Heart right ventricle (tissue), 16 donors: ENCODE measurements at regions of chr12 and their contacts with region 1.

Region 1: DNA sequence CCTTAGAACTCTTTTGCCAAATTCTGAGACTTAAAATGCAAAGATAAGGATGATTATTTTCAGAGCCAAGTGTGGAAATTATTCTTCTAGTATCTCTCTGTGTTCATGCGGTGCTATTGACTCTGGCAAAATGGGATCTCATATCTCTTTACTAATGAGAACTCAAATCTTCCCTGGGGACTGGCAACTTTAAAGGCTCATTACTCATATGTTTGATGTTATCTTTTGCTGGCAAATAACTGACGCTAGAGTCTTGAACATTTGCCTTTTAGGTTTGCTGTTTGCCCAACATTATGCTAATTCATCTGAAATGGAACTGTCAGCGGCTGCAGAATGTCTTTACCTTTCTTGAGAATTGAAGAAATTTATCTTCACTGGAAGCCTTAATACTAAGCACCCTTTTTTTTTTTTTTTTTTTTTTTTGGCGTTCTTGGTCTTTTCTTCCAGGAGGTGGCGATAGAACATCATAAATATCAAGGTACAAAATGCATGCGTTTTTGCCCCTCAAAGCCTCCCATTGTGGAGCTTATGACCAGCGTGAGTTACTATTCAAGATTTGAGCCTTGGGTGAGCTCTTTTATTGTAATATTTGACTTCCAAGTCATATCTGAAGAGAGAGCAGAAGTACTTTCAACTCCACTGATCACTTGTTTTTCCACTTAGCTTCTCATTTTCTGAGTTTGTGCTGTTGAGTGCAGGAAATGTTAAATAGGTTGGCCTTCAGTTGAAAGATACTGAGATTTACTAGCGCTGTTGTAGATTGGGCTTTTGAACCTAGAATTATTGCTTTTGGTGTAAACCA is 86.6 kb downstream of the CAND1 start:
- DNase-seq: no peak
- ATAC-seq: peak; percentile 54 to 72 (median 66)
- H3K4me3 ChIP-seq: no peak overlapping the region
- H3K27ac ChIP-seq: peak overlapping the region in 5 of 10 donors; percentile 8 to 57 (median 31)
- H3K4me1 ChIP-seq: peaks cover 4 to 52% (median 37%) of the 10 kb centered on the region in 9 donors
- H3K27me3 ChIP-seq: no peaks in the 10 kb centered on the region
- CTCF ChIP-seq: peak; percentile 26 to 74 (median 65)

Region 2: GRCh38 chr12:67068761-67069450 is 286.9 kb before region 1 on chr12:
- intact Hi-C with region 1: no loop called
- DNase-seq: peak in 1 of 2 donors; percentile 19
- ATAC-seq: peak in 3 of 8 donors; percentile 37 to 63 (median 58)
- H3K4me3 ChIP-seq: peak overlapping the region; percentile 14 to 61 (median 52)
- H3K27ac ChIP-seq: no peak overlapping the region
- H3K4me1 ChIP-seq: peaks cover 0 to 14% (median 5%) of the 10 kb centered on the region in 9 donors
- H3K27me3 ChIP-seq: peaks cover 0 to 56% (median 50%) of the 10 kb centered on the region in 7 donors
- CTCF ChIP-seq: no peak

Region 3: DNA sequence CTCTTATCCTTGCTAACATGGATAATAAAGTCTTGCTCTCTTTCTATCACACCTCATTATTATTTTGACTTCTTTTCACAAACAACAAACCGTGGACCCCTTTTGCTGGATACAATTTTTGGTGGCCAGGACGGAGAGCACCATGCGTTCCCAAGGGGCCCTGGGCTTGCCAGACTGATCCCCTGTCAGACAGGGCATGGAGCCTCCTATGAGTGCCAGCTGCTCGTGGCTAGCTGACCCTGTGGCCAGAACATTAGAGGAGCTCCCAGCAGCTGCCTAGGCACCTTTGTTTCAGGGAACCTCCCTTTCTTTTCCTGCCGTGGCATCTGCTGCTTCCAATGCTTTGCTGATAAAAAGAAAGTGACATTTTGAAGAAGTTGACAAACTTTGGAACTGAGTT is 99.1 kb before region 1 on chr12:
- intact Hi-C with region 1: no loop called
- DNase-seq: no peak
- ATAC-seq: no peak
- H3K4me3 ChIP-seq: no peak overlapping the region
- H3K27ac ChIP-seq: no peak overlapping the region
- H3K4me1 ChIP-seq: no peaks in the 10 kb centered on the region
- H3K27me3 ChIP-seq: peaks cover 0 to 6% (median 0%) of the 10 kb centered on the region in 7 donors
- CTCF ChIP-seq: no peak

Region 4: DNA sequence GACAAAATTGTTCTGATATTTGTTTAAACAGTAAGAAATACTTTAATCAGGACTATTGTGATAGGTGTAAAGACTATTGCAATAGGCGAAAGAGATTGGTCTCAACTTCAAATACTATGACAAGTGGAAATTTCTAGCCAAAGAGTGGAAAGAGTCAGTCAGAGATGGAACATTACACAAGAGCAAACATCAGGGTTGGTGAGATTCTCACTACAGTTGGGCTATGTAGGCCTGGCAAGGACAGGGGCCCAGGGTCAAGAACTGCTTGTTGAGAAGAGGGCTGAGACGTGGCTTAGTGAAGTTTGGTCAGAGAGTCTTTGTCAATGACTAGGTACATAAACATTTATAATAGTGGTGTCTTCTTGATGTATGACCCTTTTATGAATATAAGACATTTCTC is 67.2 kb before region 1 on chr12:
- intact Hi-C with region 1: no loop called
- DNase-seq: no peak
- ATAC-seq: peak in 1 of 8 donors; percentile 15
- H3K4me3 ChIP-seq: no peak overlapping the region
- H3K27ac ChIP-seq: no peak overlapping the region
- H3K4me1 ChIP-seq: peaks cover 0 to 14% (median 0%) of the 10 kb centered on the region in 9 donors
- H3K27me3 ChIP-seq: no peaks in the 10 kb centered on the region
- CTCF ChIP-seq: no peak

Region 5: GRCh38 chr12:67433385-67434175 is 77.8 kb after region 1 on chr12:
- intact Hi-C with region 1: loop called in 1 of 10 experiments (anchors 5 kb)
- DNase-seq: no peak
- ATAC-seq: no peak
- H3K4me3 ChIP-seq: no peak overlapping the region
- H3K27ac ChIP-seq: peak overlapping the region in 7 of 10 donors; percentile 13 to 85 (median 62)
- H3K4me1 ChIP-seq: peaks cover 0 to 41% (median 24%) of the 10 kb centered on the region in 9 donors
- H3K27me3 ChIP-seq: no peaks in the 10 kb centered on the region
- CTCF ChIP-seq: no peak

Region 6: DNA sequence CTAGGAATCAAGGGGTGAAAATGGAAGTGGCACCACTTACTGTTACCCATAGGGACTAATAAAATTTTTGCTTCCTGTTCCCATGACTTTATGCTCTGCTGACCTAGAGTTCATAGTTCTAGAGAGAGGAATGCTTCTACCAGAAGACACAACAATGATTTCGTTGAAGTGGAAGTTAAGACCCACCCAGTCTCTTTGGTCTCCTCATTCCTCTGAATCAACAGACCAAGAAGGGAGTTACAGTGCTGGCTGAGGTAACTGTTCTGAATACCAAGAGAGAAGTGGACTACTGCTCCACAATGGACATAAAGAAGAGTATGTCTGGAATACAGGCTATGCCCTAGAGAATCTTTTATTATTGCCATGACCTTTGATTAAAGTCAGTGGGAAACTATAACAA is 269.2 kb after region 1 on chr12:
- intact Hi-C with region 1: loop called in 1 of 10 experiments (anchors 10 kb)
- DNase-seq: no peak
- ATAC-seq: no peak
- H3K4me3 ChIP-seq: no peak overlapping the region
- H3K27ac ChIP-seq: no peak overlapping the region
- H3K4me1 ChIP-seq: peaks cover 0 to 5% (median 0%) of the 10 kb centered on the region in 9 donors
- H3K27me3 ChIP-seq: no peaks in the 10 kb centered on the region
- CTCF ChIP-seq: no peak

Region 7: GRCh38 chr12:68223083-68223747 is 867.4 kb after region 1 on chr12:
- intact Hi-C with region 1: loop called in 1 of 10 experiments (anchors 10 kb)
- DNase-seq: peak; percentile 55 to 81
- ATAC-seq: peak; percentile 91 to 99 (median 98)
- H3K4me3 ChIP-seq: peak overlapping the region in 1 of 10 donors; percentile 13
- H3K27ac ChIP-seq: peak overlapping the region in 1 of 10 donors; percentile 15
- H3K4me1 ChIP-seq: peaks cover 0 to 18% (median 3%) of the 10 kb centered on the region in 9 donors
- H3K27me3 ChIP-seq: peaks cover 0 to 11% (median 0%) of the 10 kb centered on the region in 7 donors
- CTCF ChIP-seq: peak; percentile 73 to 90 (median 85)